ENCODE measurements at regions of chr6 and their contacts with region 1.

Region 1: DNA sequence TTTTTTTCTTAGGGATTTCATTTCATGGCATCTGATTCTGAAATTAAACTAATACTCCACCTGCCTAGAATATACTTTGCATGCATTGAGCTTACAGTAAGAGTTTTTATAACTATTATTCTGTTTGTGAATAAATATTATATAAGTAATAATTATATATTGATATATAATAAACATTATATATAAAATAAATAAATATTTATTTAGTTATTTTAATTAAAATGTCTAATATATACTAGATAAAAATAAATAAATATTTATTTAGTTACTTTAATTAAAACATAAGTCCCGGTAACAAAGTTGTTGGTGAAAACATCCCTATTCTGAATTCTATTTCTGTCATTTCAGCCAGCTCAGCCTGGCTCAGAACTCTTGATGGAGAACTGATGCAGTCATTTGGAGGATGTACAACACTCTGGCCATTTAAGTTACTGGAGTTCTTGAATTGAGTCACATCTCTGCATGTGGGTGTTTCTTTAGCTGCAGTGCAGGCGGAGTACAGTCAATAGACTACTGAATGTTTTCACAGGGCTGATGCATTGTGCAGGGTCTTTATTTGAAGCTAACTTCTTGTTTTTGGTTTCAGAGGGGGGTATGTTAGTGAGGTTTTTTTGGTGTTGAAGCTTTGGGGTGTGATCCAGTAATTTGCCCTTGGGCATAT is 508.9 kb upstream of the ADGRB3 start:
- DNase-seq: no peak
- H3K4me3 ChIP-seq: no peak overlapping the region
- H3K27ac ChIP-seq: no peak overlapping the region
- H3K4me1 ChIP-seq: no peaks in the 10 kb centered on the region
- CTCF ChIP-seq: no peak

Region 2: DNA sequence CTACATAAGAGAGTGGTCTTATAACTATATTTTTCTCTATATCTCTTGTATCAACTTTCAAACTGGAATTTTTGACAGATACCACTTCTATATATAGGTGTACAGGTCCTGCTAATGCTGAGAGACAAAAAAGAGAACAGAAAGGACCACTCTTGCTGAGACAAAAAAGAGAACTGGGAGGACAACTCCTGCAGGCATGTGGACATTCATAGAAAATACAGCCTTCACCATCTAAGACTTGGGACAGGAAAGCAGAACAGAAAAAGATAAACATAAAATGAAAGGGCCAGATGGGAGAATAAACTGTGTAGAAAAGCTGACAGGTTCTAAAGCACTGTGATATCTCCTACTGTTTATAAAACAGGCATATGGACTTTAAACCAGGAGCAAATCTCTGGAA is 32.1 kb before region 1 on chr6:
- CTCF ChIA-PET with region 1: no interaction called
- POLR2A ChIA-PET with region 1: interaction called, 11 read pairs
- intact Hi-C with region 1: loop called (anchors 5 kb)
- DNase-seq: peak; percentile 63
- H3K4me3 ChIP-seq: no peak overlapping the region
- H3K27ac ChIP-seq: peak overlapping the region; percentile 64
- H3K4me1 ChIP-seq: peaks cover 26% of the 10 kb centered on the region
- CTCF ChIP-seq: no peak

Region 3: GRCh38 chr6:68137223-68137622 is 11.0 kb after region 1 on chr6:
- CTCF ChIA-PET with region 1: no interaction called
- POLR2A ChIA-PET with region 1: no interaction called
- intact Hi-C with region 1: no loop called
- DNase-seq: no peak
- H3K4me3 ChIP-seq: no peak overlapping the region
- H3K27ac ChIP-seq: no peak overlapping the region
- H3K4me1 ChIP-seq: no peaks in the 10 kb centered on the region
- CTCF ChIP-seq: no peak

Region 4: GRCh38 chr6:68186870-68187269 is 60.7 kb after region 1 on chr6:
- CTCF ChIA-PET with region 1: no interaction called
- POLR2A ChIA-PET with region 1: no interaction called
- intact Hi-C with region 1: no loop called
- DNase-seq: no peak
- H3K4me3 ChIP-seq: no peak overlapping the region
- H3K27ac ChIP-seq: no peak overlapping the region
- H3K4me1 ChIP-seq: no peaks in the 10 kb centered on the region
- CTCF ChIP-seq: no peak

Region 5: DNA sequence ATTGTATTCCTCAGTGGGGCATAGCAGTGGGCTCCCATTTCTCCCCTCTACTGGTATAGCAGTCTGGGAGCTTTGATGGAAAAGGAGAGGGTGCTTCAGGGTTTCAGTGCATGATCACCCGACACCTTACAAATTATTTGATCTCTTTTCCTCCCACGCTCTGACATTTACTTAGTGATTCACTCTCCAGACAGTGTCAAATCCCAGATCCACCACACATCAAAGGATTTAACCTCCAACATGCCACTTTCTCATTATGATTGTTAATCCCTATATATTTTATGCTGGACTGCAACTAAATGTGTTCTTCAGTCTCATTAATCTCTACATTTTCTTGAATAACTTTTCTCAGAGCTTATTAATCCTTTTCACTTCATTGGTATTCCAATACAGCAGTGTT is 267.4 kb after region 1 on chr6:
- CTCF ChIA-PET with region 1: no interaction called
- POLR2A ChIA-PET with region 1: no interaction called
- intact Hi-C with region 1: no loop called
- DNase-seq: no peak
- H3K4me3 ChIP-seq: no peak overlapping the region
- H3K27ac ChIP-seq: no peak overlapping the region
- H3K4me1 ChIP-seq: no peaks in the 10 kb centered on the region
- CTCF ChIP-seq: no peak

Measured in OCI-LY7 (cell line).